Breast epithelium (tissue), 4 donors: ENCODE measurements at regions of chr6 and their contacts with region 1.

Region 1: DNA sequence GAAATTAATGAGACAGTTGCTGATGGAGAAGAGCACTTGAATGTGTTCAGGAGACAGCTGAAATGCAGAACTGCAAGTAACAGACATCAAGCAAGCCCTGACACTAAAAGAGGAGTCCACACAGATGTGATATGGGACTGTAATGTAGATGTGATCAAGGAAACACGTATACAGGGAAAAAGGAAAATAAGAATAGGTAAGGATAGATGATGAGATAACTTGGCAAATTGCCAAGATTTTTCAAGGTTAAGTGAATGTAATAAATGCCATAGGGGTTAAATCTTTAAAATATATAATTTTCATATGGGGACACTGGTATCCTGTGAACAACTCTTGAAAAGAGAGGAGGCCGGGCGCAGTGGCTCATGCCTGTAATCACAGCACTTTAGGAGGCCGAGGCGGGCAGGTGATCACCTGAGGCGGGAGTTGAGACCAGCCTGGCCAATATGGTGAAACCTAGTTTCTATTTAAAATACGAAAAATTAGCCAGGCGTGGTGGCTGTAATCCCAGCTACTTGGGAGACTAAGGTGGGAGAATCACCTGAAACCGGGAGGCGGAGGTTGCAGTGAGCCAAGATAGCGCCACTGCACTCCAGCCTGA is 7.2 kb upstream of the SNX14 start:
- DNase-seq: no peak
- H3K4me3 ChIP-seq: no peak overlapping the region
- H3K27ac ChIP-seq: no peak overlapping the region
- H3K4me1 ChIP-seq: no peaks in the 10 kb centered on the region
- H3K27me3 ChIP-seq: no peaks in the 10 kb centered on the region
- CTCF ChIP-seq: no peak
- POLR2A ChIP-seq: no peak

Region 2: GRCh38 chr6:85642774-85643536 is 42.1 kb after region 1 on chr6 and contains the start of gene SYNCRIP:
- intact Hi-C with region 1: no loop called
- DNase-seq: peak; percentile 98 to 99
- H3K4me3 ChIP-seq: peak within 1 kb of the TSS; percentile 97 to 98 (median 98)
- H3K27ac ChIP-seq: peak within 1 kb of the TSS; percentile 98 to 99
- H3K4me1 ChIP-seq: no peaks in the 10 kb centered on the region
- H3K27me3 ChIP-seq: no peaks in the 10 kb centered on the region
- CTCF ChIP-seq: peak in 1 of 3 donors; percentile 16
- POLR2A ChIP-seq: peak; percentile 98
- total RNA-seq, gene SYNCRIP: 56.0 to 77.9 (median 67.8) TPM

Region 3: GRCh38 chr6:87257565-87257964 is 1656.8 kb after region 1 on chr6:
- intact Hi-C with region 1: loop called (anchors 5 kb)
- DNase-seq: no peak
- H3K4me3 ChIP-seq: no peak overlapping the region
- H3K27ac ChIP-seq: no peak overlapping the region
- H3K4me1 ChIP-seq: no peaks in the 10 kb centered on the region
- H3K27me3 ChIP-seq: no peaks in the 10 kb centered on the region
- CTCF ChIP-seq: no peak
- POLR2A ChIP-seq: no peak